ENCODE measurements at regions of chr18 and their contacts with region 1.

Region 1: DNA sequence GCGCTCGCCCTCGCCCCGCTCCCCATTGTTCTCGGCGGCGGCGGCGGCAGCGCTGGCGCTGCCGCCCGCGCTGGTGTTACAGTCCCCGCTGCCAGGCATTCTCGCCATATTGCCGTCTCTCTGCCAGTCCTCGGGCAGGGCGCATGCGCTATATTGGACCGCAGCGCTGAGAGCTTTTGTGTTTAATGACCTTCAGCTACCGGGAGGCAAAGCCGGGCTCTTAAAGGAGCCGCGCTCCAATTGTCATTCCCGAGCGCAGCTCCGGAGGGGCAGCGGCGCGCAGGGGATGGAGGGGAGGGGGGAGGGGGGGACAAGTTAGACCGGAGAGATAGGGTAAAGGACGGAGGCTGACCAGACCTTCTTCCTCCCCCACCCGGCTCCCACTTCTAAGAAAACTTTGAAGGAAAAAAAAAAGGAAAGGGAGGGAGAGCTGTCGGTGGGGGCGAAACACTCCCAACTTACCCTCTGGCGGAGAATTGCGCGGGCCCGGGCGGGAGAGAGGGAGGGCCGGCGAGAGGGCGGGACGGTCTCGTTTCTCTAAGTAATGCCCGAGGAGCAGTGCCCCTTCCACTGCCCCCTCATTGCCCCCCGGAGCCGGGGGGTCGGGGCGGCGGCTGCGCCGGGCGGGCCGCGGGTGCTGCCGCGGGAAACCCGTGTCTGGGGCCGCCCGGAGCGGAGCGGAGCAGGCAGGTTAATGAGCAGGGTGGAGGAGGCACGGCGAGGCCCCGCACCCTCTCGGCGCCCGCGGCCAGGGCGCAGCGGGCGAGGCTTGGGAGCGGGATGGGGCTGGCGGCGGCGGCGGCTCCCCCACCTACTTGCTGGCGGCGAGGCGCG is at the start of gene KCTD1:
- DNase-seq: peak; percentile 85
- H3K4me3 Mint-ChIP-seq: peak within 1 kb of the TSS; percentile 93
- H3K27ac Mint-ChIP-seq: peak within 1 kb of the TSS; percentile 75
- H3K4me1 Mint-ChIP-seq: peaks cover 24% of the 10 kb centered on the region
- H3K27me3 Mint-ChIP-seq: no peaks in the 10 kb centered on the region
- CTCF ChIP-seq: no peak
- total RNA-seq, gene KCTD1: 29.5 and 37.9 TPM in 2 replicates

Region 2: GRCh38 chr18:26159353-26159752 is 389.3 kb before region 1 on chr18:
- CTCF ChIA-PET with region 1: no interaction called
- POLR2A ChIA-PET with region 1: no interaction called
- intact Hi-C with region 1: no loop called
- DNase-seq: peak; percentile 11
- H3K4me3 Mint-ChIP-seq: no peak overlapping the region
- H3K27ac Mint-ChIP-seq: no peak overlapping the region
- H3K4me1 Mint-ChIP-seq: no peaks in the 10 kb centered on the region
- H3K27me3 Mint-ChIP-seq: no peaks in the 10 kb centered on the region
- CTCF ChIP-seq: peak; percentile 33

Region 3: DNA sequence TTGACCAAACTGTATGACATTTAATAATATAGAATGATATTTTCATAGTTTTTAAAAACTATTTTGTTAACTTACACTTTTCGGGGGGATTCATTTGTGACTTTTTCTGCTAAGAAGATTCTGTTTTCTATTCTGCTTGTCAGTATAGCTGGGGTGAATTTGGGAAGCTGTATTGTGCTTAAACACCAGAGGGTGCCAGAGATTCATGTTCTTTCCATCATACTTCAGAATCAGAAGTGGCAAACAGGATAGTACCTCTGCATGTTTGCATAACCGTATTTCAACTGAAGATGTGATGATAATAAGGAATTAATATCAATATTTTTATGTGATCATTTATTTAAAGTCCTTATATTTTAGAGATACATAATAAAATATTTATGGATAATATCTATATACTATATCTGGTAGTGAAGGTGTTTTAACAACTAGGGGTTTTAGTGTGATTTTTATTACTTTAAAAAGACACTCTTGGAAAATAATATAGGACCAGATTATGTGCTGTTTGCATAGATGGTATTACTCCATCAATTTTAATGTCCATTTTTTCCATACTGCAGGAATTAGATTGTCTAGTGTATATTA is 241.4 kb before region 1 on chr18:
- CTCF ChIA-PET with region 1: interaction called, 6 read pairs
- POLR2A ChIA-PET with region 1: interaction called, 3 read pairs
- intact Hi-C with region 1: loop called (anchors 1 kb)
- DNase-seq: peak; percentile 65
- H3K4me3 Mint-ChIP-seq: no peak overlapping the region
- H3K27ac Mint-ChIP-seq: no peak overlapping the region
- H3K4me1 Mint-ChIP-seq: no peaks in the 10 kb centered on the region
- H3K27me3 Mint-ChIP-seq: no peaks in the 10 kb centered on the region
- CTCF ChIP-seq: peak; percentile 59

Region 4: DNA sequence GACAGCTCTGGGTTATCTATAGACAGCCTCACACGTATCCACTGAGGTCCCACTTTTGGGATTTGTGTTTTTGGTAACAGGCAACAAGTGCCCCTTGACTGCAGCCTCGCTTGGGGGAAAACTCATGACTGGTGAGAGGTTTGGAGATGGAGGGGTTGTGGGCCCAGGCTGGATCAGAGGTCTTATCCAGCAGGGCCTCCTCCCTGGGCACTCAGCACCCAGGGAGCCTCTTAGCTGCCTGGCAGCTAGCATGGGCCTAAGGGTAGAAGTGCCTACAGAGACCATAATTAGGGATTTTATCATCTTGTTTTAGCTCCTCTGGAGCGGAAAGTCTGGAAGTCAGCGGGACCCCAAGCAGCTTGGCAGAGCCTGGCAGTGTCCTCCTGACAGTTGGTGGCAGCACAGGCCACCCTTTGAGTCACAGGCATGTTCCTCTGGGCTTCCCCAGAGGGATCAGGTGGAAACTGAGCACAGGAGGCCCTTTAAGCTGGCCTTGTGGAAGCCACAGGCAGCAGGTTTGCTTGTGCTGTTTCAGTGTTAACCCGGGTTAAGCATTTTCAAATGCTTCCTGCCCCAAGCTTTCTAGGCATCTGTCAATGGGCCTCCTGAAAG is 143.3 kb before region 1 on chr18:
- CTCF ChIA-PET with region 1: interaction called, 40 read pairs
- POLR2A ChIA-PET with region 1: interaction called, 7 read pairs
- intact Hi-C with region 1: loop called (anchors 1 kb)
- DNase-seq: peak; percentile 64
- H3K4me3 Mint-ChIP-seq: no peak overlapping the region
- H3K27ac Mint-ChIP-seq: no peak overlapping the region
- H3K4me1 Mint-ChIP-seq: peaks cover 11% of the 10 kb centered on the region
- H3K27me3 Mint-ChIP-seq: no peaks in the 10 kb centered on the region
- CTCF ChIP-seq: peak; percentile 57

Region 5: DNA sequence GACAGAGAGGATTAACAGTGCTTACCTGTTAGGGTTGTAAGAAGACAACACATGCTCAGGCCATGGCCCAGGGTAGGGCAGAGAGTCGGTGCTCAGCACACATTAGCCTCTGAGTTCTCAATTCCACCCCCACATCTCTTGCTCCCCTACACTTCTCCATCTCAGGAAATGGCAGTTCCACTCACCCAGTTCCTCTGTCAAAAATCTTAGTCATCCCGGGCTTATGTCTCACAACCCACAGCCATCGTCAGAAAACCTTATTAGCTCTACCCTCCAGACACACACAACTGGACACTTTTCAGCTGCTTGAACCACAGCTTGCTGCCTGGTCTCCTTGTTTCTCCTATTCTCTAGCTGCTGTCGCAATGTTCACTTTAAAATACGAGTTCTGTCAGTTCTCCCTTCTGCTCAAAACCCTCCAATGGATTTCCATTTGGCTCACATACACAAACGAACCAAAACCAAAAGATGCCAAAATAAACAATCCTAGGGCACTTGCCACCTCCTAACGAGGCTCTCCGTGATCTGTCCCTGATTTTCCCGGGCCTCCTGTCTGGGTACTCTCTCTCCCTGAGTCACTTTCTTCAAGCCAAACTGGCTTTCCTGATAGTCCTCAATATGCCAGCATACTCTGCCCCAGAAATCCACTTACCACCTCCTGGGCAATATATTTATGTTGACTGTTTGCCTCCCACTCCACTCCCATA is 90.0 kb before region 1 on chr18:
- CTCF ChIA-PET with region 1: interaction called, 5 read pairs
- POLR2A ChIA-PET with region 1: interaction called, 18 read pairs
- intact Hi-C with region 1: loop called (anchors 5 kb)
- DNase-seq: peak; percentile 80
- H3K4me3 Mint-ChIP-seq: peak overlapping the region; percentile 55
- H3K27ac Mint-ChIP-seq: peak overlapping the region; percentile 89
- H3K4me1 Mint-ChIP-seq: peaks cover 41% of the 10 kb centered on the region
- H3K27me3 Mint-ChIP-seq: no peaks in the 10 kb centered on the region
- CTCF ChIP-seq: no peak

Region 6: GRCh38 chr18:26487437-26487836 is 61.2 kb before region 1 on chr18:
- CTCF ChIA-PET with region 1: interaction called, 19 read pairs
- POLR2A ChIA-PET with region 1: interaction called, 108 read pairs
- intact Hi-C with region 1: no loop called
- DNase-seq: peak; percentile 92
- H3K4me3 Mint-ChIP-seq: no peak overlapping the region
- H3K27ac Mint-ChIP-seq: peak overlapping the region; percentile 83
- H3K4me1 Mint-ChIP-seq: peaks cover 34% of the 10 kb centered on the region
- H3K27me3 Mint-ChIP-seq: no peaks in the 10 kb centered on the region
- CTCF ChIP-seq: no peak

Region 7: DNA sequence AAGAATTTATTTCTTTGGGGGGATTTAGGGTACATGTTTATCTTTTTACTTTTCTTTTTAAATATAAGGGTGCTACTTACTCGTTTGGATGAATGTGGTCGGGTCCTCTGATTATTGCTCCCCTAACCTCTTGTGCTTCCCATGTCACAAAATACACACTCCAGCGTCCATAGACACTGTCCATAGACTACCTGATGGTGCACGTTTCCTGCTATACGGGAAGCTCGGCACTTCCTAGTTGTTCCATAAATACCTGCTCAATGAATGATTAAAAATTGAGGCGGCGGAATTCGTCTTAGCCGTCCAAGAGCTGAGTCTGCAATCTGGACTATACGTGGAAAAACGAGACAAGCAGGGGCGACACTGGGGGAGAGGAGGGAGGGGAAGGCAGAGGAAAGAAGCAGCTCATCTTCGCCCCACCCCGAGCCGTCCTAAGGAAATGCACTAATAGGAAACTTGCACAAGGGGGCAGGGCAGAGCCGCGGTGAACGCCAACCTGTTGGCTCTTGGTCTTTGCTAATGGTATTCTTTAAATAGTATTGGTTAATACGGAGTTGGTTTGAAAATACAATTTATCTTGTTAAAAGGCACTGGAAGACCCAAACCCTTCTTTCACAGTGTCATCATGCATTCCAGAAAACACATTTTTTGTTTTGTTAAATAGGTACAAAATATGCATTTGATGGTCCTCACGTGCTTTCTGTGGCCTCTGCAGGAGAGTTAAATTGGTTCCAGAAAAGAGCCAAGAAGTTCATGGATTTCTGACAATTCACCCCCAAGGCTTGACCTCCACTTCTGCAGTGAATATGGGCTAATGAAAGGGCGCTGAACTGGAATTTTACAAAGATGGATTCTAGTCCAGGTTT is 72.7 kb after region 1 on chr18:
- CTCF ChIA-PET with region 1: interaction called, 10 read pairs
- POLR2A ChIA-PET with region 1: interaction called, 6 read pairs
- intact Hi-C with region 1: loop called (anchors 2 kb)
- DNase-seq: peak; percentile 77
- H3K4me3 Mint-ChIP-seq: peak overlapping the region; percentile 66
- H3K27ac Mint-ChIP-seq: no peak overlapping the region
- H3K4me1 Mint-ChIP-seq: peaks cover 9% of the 10 kb centered on the region
- H3K27me3 Mint-ChIP-seq: no peaks in the 10 kb centered on the region
- CTCF ChIP-seq: peak; percentile 75

Region 8: DNA sequence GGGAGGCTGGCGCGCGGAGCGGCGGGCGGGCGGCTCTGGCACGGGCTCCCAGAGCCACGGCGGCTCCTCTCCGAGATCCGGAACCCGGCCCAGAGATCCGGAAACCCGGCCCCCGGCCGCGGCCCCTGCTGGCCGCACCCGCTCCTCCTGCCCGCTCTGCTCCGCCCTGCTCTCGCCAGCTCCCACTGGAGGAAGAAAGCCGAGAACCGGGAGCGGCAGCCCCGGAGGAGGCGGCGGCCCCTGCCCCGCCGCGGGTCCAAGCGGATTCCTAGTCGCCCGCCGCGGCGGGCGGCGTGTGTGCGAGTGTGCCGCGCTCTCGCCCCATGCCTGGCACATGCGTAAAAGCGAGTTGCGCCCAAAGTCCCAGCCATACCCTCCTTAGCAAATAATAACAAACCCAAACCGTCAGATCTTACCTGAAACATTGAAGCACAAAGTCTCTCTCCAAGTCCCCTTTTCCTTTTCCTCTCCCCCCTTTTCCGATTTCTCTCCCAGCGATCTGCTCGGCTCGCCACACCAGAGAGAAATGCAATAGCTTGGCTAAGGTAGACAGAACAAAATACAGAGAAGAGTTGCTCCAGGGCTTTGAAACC is 108.4 kb after region 1 on chr18:
- CTCF ChIA-PET with region 1: interaction called, 4 read pairs
- POLR2A ChIA-PET with region 1: interaction called, 22 read pairs
- intact Hi-C with region 1: loop called (anchors 1 kb)
- DNase-seq: peak; percentile 73
- H3K4me3 Mint-ChIP-seq: peak overlapping the region; percentile 99
- H3K27ac Mint-ChIP-seq: peak overlapping the region; percentile 94
- H3K4me1 Mint-ChIP-seq: peaks cover 14% of the 10 kb centered on the region
- H3K27me3 Mint-ChIP-seq: no peaks in the 10 kb centered on the region
- CTCF ChIP-seq: peak; percentile 15

Measured in MCF 10A (cell line).